Posterior cingulate gyrus (tissue), 11 donors: ENCODE measurements at regions of chr9 and their contacts with region 1.

Region 1: DNA sequence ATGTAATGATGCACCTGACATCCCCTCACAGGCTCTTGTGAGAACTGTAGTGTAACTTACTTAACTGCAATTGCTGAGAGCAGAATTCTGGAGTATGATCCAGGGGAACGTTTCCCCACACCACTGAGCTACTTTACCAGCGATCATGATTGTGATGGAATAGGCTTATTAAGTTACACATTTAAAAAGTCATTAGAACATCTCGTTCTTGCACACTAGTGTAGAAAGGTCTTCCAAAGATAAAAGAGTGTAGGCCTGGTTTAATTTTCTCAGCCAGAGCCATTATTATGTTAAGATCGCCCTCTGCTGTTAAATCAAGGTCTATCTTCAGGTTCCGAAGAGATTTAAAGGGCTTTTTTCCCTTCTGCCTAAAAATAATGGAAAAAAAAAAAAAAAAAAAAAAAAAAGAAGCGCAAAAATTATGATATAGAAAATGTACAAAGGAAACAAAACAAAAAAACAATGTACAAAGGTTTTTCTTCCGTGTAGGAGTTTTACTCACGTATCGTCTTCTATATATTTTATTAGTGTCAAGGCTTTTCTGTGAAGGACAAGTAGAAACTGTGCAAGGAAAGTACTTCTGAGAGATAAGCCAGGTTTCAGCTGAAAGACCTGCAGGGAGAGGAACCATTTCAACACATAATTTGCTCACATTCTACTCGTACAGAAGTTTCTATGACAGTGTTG is 18.6 kb upstream of the MOB3B start:
- DNase-seq: no peak

Region 2: DNA sequence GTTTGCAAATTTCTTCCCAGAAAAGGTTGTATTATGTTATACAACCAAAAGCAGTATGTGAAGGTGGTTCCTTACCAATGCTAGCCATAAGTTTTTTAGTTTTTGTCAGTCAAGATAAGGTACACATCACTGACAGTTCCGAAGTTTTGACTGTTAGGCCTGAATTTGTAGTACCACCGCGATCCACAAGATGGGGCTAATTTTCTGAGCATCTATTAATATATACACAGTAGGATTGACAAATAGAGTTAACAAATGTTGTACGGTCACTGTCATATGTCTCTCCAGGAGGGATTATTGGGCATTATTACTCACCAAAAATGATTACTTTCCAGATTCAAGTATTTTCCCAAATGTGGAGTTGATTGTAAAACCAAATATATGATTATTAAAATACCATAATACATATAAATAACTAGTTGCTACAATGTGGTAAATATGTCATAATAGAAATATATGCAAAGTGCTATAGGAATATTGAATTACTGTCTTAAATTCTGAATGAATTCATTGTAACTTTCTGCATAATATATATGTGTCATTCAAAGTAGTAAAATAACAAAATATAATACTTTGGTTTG is 514.3 kb before region 1 on chr9:
- intact Hi-C with region 1: loop called (anchors 10 kb)
- DNase-seq: peak in 5 of 10 donors; percentile 32 to 73 (median 59)

Region 3: DNA sequence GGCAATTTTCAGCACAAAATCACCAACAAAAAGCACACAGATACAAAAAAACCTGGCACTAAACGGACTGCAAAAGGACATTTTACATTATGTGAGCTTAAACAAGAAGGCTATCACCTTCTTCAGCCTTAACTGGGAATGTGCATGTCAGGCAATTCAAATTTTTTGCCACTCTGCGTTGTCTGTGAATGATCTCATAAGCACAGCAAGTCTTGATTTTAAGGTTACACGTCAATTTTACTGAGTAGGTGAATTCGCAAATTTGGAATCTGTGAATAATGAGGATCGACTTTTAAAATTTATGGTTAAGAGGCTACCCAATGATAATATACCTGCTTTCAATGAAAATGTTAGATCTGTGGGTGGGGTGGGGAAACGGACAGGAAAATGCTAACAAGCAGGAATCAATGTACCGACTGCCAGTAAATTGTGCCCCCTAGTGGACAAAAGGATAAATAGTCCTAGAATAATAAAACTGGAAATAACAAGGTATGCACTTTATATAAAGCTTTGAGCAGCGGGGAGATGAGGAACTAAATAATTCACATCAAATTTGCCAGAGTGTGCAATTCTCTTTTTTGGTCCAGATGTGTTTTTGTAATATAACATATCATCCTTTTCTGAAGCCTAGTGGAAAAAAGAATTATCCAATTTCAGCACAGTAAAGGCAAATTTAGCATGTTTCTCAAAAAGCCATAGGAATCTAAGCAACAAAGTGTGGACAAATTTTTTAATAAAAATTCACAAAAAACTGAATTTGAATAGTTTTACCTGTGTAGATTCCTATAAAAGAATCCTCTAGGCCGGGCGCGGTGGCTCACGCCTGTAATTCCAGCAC is 271.8 kb before region 1 on chr9:
- intact Hi-C with region 1: loop called (anchors 5 kb)
- DNase-seq: peak in 1 of 10 donors; percentile 13

Region 4: DNA sequence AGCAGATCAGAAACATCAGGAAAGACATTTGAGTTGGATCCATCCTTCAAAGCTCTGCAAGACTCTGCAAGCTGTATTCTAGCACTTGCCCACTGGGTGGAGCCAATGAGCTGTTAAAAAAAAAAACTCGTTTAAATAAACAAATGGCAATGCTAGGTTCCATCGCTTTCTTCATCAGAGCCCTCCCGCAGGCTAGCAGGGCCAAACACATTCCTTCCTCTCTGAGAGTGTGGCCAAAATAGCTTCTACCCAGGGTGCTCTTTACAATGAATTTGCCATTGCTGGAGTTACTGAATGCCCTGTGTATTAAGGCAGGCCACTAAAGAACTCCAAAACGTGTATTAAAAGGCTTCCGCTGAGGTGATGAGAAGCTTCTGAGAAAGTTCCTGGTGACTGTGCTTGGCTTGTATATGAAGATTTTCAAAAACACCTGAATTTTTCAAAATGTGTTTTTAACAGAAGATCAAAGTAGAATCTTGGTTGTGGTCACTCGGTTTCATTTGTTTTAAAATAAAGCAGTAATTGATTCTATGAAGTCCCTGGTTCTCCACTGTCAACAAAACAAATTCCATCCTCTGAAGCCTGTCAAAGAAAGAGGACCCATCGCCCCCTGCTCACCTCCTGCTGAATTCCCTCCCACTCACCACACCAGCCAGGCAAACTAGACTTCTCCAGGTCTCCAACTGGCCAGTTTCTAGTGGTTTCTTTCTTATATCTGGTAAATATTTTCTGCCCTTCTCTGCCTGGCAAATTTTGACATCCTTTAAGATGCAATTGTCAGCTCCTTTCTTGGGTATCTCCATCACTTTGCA is 214.8 kb before region 1 on chr9:
- intact Hi-C with region 1: loop called (anchors 1 kb)
- DNase-seq: peak in 8 of 10 donors; percentile 37 to 92 (median 65)

Region 5: GRCh38 chr9:27573634-27574590 is 25.7 kb after region 1 on chr9:
- intact Hi-C with region 1: no loop called
- DNase-seq: peak; percentile 81 to 98 (median 93)